BJ (cell line): ENCODE measurements at regions of chr11 and their contacts with region 1.

Region 1: GRCh38 chr11:78645226-78646202 is 70.8 kb upstream of the NARS2 start:
- DNase-seq: no peak
- H3K4me3 ChIP-seq: no peak overlapping the region
- H3K27me3 ChIP-seq: peaks cover 4% of the 10 kb centered on the region
- CTCF ChIP-seq: peak; percentile 90

Region 2: GRCh38 chr11:78688464-78688863 is 43.0 kb after region 1 on chr11:
- CTCF ChIA-PET with region 1: interaction called, 18 read pairs
- POLR2A ChIA-PET with region 1: no interaction called
- DNase-seq: no peak
- H3K4me3 ChIP-seq: no peak overlapping the region
- H3K27me3 ChIP-seq: no peaks in the 10 kb centered on the region
- CTCF ChIP-seq: no peak

Region 3: GRCh38 chr11:78791254-78791653 is 145.7 kb after region 1 on chr11:
- CTCF ChIA-PET with region 1: interaction called, 41 read pairs
- POLR2A ChIA-PET with region 1: no interaction called
- DNase-seq: no peak
- H3K4me3 ChIP-seq: no peak overlapping the region
- H3K27me3 ChIP-seq: no peaks in the 10 kb centered on the region
- CTCF ChIP-seq: no peak

Region 4: DNA sequence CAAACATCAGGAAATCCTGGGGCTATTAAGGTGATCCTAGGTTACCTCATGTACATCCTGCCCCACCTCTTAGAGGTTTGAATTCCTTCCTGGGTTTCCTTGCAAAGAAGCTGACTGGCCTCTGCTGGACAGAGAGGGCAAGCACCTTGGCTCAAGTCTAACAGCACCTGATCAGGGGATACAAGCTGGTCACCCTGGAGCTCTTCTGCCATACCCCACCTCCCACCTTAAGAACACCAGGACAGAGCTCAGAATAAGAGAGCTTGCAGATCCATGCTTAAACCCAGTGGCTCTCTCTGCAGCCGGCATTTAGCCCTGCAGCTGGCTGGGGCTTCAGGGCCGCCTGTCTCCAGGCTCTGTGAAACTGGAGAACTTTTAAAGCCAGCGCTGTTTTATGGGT is 315.7 kb after region 1 on chr11:
- CTCF ChIA-PET with region 1: interaction called, 54 read pairs
- POLR2A ChIA-PET with region 1: no interaction called
- DNase-seq: no peak
- H3K4me3 ChIP-seq: no peak overlapping the region
- H3K27me3 ChIP-seq: no peaks in the 10 kb centered on the region; the same call in 1 of the 2 replicates
- CTCF ChIP-seq: peak; percentile 56

Region 5: GRCh38 chr11:79076526-79077115 is 431.1 kb after region 1 on chr11:
- CTCF ChIA-PET with region 1: interaction called, 29 read pairs
- POLR2A ChIA-PET with region 1: no interaction called
- DNase-seq: no peak
- H3K4me3 ChIP-seq: no peak overlapping the region
- H3K27me3 ChIP-seq: no peaks in the 10 kb centered on the region
- CTCF ChIP-seq: peak; percentile 79

Region 6: DNA sequence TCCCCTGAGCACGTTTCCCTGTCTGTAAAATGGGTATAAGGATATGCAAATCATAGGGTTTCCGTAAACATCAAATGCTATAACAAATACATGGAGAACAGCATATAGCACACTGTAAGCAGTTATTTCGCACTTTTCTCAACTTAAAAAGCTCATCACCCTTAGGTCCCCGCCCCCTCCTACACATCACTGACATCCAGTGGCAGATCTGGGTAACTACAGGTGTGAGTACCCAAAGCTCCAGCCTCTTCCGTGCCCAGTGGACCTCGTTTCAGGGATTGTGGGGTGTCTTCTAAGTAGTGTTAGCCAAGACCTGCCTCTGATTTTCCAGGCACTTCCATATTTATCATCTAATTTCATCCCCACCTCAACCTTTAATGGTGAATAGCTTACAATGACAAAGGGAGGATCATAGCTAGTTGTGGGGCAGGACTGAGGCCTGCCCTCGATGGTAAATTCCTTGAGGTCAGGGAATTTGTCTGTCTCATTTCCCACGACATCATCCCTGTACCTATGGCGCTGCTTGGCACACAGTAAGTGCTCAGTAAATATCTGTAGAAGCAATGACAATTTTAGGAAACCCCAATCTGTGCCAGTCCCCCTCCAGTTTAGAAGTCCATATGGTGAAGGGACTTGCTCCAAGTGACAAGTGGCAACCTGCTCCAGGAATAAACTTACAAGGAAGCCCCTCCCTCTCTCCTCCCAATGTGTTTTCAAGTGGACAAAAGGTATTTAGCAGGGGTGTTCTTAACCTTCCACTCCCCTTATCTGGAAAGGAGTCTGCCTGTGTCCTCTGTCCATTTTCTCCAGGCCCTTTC is 454.8 kb after region 1 on chr11:
- CTCF ChIA-PET with region 1: interaction called, 69 read pairs
- POLR2A ChIA-PET with region 1: no interaction called
- DNase-seq: no peak
- H3K4me3 ChIP-seq: no peak overlapping the region
- H3K27me3 ChIP-seq: no peaks in the 10 kb centered on the region
- CTCF ChIP-seq: peak; percentile 89